ENCODE measurements at regions of chr6 and their contacts with region 1.

Region 1: GRCh38 chr6:142857233-142857761 is 87.7 kb downstream of the HIVEP2 start:
- DNase-seq: peak in 11 of 14 experiments; percentile 25 to 65 (median 37)
- ATAC-seq: peak; percentile 40
- H3K4me3 ChIP-seq: peak overlapping the region; percentile 46
- H3K4me3 Mint-ChIP-seq: peak overlapping the region; percentile 82
- H3K27ac ChIP-seq: peak overlapping the region; percentile 88 to 99
- H3K27ac Mint-ChIP-seq: peak overlapping the region; percentile 94
- H3K4me1 ChIP-seq: peaks cover 69% of the 10 kb centered on the region
- H3K4me1 Mint-ChIP-seq: peaks cover 93% of the 10 kb centered on the region
- H3K27me3 ChIP-seq: no peaks in the 10 kb centered on the region
- H3K27me3 Mint-ChIP-seq: no peaks in the 10 kb centered on the region
- CTCF ChIP-seq: no peak

Region 2: DNA sequence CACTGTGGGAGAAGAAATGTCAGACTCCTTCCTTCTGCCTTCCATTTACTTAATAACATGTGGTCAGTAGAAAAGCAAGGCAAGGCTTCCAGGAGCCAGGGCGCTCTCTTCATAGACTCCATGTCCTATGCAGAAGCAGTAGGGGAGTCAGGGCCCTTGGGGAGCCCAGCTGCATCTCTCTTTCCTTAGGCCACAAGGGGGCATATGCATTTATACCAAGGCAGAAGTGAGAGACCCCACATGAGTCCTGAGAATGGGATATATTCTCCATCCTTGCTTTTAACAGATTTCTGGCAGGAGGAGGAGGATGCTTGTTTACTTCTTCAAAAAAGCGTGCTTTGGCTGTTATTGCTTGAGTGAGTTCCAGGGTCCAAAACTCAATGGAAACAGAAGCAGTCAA is 110.8 kb before region 1 on chr6:
- CTCF ChIA-PET with region 1: no interaction called
- POLR2A ChIA-PET with region 1: interaction called, 10 read pairs
- intact Hi-C with region 1: no loop called
- DNase-seq: peak in 11 of 14 experiments; percentile 7 to 67 (median 15)
- ATAC-seq: peak; percentile 55
- H3K4me3 ChIP-seq: no peak overlapping the region
- H3K4me3 Mint-ChIP-seq: no peak overlapping the region
- H3K27ac ChIP-seq: no peak overlapping the region
- H3K27ac Mint-ChIP-seq: no peak overlapping the region
- H3K4me1 ChIP-seq: peaks cover 6% of the 10 kb centered on the region
- H3K4me1 Mint-ChIP-seq: peaks cover 28% of the 10 kb centered on the region
- H3K27me3 ChIP-seq: no peaks in the 10 kb centered on the region
- H3K27me3 Mint-ChIP-seq: no peaks in the 10 kb centered on the region
- CTCF ChIP-seq: peak; percentile 56

Region 3: GRCh38 chr6:142819603-142820337 is 37.5 kb before region 1 on chr6:
- CTCF ChIA-PET with region 1: no interaction called
- POLR2A ChIA-PET with region 1: interaction called, 28 read pairs
- intact Hi-C with region 1: loop called in 1 of 2 experiments (anchors 5 kb)
- DNase-seq: peak in 5 of 14 experiments; percentile 13 to 84 (median 75)
- ATAC-seq: peak; percentile 51
- H3K4me3 ChIP-seq: peak overlapping the region; percentile 45
- H3K4me3 Mint-ChIP-seq: peak overlapping the region; percentile 84
- H3K27ac ChIP-seq: peak overlapping the region; percentile 75 to 84
- H3K27ac Mint-ChIP-seq: peak overlapping the region; percentile 82
- H3K4me1 ChIP-seq: peaks cover 52% of the 10 kb centered on the region
- H3K4me1 Mint-ChIP-seq: peaks cover 82% of the 10 kb centered on the region
- H3K27me3 ChIP-seq: no peaks in the 10 kb centered on the region
- H3K27me3 Mint-ChIP-seq: no peaks in the 10 kb centered on the region
- CTCF ChIP-seq: no peak

Region 4: DNA sequence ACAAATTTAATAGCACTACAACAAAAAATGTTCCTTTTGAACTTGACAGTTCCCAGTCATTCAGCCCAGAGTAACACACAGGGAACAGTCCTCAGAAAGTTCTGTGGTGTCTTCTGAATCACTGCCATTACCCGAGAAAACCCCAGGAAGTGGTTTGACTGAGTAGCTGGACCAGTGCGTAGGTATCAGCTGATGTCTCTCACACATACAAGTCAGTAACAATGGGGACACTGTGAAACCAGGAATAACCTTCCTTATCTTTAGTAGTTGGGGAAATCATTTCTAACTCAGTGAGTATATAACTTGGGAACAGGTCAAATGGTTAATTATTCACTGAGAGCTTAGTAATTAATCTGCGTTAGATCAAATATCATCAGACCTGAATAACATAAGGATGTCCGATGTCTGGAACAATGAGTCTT is 14.6 kb after region 1 on chr6:
- CTCF ChIA-PET with region 1: interaction called, 6 read pairs
- POLR2A ChIA-PET with region 1: interaction called, 25 read pairs
- intact Hi-C with region 1: loop called in 1 of 2 experiments (anchors 2 kb)
- DNase-seq: peak in 9 of 14 experiments; percentile 21 to 91 (median 54)
- ATAC-seq: peak; percentile 89
- H3K4me3 ChIP-seq: no peak overlapping the region
- H3K4me3 Mint-ChIP-seq: peak overlapping the region; percentile 4
- H3K27ac ChIP-seq: peak overlapping the region; percentile 22 to 56
- H3K27ac Mint-ChIP-seq: peak overlapping the region; percentile 91
- H3K4me1 ChIP-seq: peaks cover 50% of the 10 kb centered on the region
- H3K4me1 Mint-ChIP-seq: peaks cover 94% of the 10 kb centered on the region
- H3K27me3 ChIP-seq: no peaks in the 10 kb centered on the region
- H3K27me3 Mint-ChIP-seq: no peaks in the 10 kb centered on the region
- CTCF ChIP-seq: no peak

Region 5: DNA sequence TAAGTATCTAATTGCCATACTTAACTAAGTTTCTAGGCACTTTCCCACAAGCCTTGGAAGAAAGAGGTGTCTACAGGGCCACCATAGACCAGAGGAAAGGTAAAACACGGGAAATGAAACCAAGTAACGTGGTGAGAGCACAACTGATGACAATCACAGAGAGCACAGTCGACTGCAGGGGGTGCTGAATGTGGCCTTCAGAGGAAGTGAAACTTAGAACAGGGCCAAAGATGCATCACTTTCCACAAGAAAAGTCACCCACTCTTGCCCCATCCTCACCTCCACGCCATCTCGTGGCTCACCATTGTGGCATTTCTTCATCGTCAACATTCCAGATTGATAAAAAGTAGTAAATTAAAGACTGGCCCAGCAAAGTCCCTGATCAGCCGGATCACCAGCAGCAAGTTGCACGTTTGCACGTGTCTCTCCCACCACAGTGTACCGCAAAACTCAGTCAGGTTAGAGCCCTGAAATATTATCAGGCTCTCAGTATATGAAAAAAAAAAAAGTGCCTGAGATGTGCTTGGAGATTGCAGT is 56.3 kb after region 1 on chr6:
- CTCF ChIA-PET with region 1: no interaction called
- POLR2A ChIA-PET with region 1: interaction called, 11 read pairs
- intact Hi-C with region 1: no loop called
- DNase-seq: peak; percentile 51 to 91 (median 64)
- ATAC-seq: peak; percentile 93
- H3K4me3 ChIP-seq: peak overlapping the region; percentile 41
- H3K4me3 Mint-ChIP-seq: peak overlapping the region; percentile 88
- H3K27ac ChIP-seq: peak overlapping the region; percentile 88 to 90
- H3K27ac Mint-ChIP-seq: peak overlapping the region; percentile 96
- H3K4me1 ChIP-seq: peaks cover 63% of the 10 kb centered on the region
- H3K4me1 Mint-ChIP-seq: peaks cover 89% of the 10 kb centered on the region
- H3K27me3 ChIP-seq: no peaks in the 10 kb centered on the region
- H3K27me3 Mint-ChIP-seq: no peaks in the 10 kb centered on the region
- CTCF ChIP-seq: peak; percentile 42

Region 6: DNA sequence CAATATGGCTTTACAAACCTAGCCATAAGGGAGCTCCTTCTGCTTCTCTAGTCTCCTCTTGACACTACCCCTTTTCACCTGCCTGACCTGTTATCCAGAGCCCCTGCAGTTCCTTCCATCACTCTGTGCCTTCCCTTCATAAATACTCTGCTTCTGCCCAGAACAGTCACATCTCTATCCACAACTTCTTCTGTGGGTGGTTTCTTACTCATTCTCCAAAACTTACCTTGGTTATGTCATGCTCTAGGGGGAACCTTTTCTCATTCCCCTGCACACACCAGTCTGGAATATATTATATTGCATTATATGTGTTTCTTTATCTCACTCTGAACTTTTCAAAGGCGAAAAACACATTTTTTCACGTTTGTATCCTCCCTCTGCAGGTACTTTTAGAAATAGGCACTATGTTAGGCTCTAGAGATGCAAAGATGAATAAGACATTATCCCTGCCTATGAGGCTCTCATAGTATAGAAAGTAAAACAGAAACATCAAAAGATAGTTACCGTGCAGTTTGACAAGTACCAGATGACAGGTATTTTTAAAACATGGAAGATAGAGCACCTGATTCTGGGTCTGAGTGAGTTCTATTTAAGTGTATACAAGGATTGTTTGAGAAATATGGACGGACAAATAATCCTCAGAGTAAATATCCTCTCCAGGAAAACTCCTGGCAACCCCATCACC is 254.9 kb after region 1 on chr6:
- CTCF ChIA-PET with region 1: no interaction called
- POLR2A ChIA-PET with region 1: no interaction called
- intact Hi-C with region 1: no loop called
- DNase-seq: no peak
- ATAC-seq: no peak
- H3K4me3 ChIP-seq: no peak overlapping the region
- H3K4me3 Mint-ChIP-seq: no peak overlapping the region
- H3K27ac ChIP-seq: no peak overlapping the region
- H3K27ac Mint-ChIP-seq: no peak overlapping the region
- H3K4me1 ChIP-seq: no peaks in the 10 kb centered on the region
- H3K4me1 Mint-ChIP-seq: no peaks in the 10 kb centered on the region
- H3K27me3 ChIP-seq: no peaks in the 10 kb centered on the region
- H3K27me3 Mint-ChIP-seq: no peaks in the 10 kb centered on the region
- CTCF ChIP-seq: no peak